HepG2 (cell line): ENCODE measurements at regions of chr16 and their contacts with region 1.

Region 1: GRCh38 chr16:11833951-11834695 is 17.2 kb downstream of the RSL1D1 start:
- DNase-seq: peak; percentile 84
- ATAC-seq: peak; percentile 61
- H3K4me3 ChIP-seq: no peak overlapping the region
- H3K27ac ChIP-seq: no peak overlapping the region
- H3K4me1 ChIP-seq: peaks cover 28% of the 10 kb centered on the region
- H3K27me3 ChIP-seq: no peaks in the 10 kb centered on the region
- CTCF ChIP-seq: no peak
- EP300 ChIP-seq: peak in 1 of 2 experiments; percentile 41; a peak in 2 of 4 replicates
- POLR2A ChIP-seq: no peak
- RAD21 ChIP-seq: no peak

Region 2: DNA sequence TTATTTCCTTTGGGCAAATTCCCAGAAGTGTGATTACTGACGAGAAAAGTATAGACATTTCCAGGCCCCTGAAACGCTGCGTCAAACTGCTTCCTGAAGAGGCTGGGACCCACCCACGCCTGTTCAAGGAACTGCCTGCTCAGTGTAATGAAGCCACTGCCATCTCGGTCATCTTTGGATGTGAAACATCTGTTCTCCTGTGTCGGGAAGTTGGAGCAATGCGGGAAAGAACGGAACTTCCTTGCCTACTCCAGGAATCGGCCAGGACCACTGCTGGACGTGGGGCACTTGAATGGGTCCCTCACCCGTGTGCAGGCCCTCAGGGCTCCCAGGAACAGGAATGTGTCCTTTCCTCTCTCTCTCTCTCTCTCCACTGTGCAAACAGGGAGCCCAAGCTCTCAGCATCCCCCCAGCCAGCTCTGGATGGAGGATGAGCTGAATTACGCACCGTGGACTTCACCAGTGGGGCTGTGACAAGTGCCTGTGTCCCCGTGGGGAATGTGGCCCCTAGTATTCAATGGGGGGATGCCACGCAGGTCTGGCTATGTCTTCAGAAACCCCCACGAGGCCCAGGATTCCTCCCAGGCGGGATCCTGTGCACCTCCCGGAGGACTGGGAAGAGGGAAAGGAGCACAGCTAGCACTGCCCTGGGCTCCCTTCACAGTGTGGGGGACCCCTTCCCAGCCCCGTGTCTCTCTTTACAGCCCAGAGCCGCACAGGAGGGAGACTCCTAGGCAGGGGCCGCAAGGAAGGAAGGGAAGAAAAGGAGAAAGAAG is 229.2 kb before region 1 on chr16:
- CTCF ChIA-PET with region 1: no interaction called
- POLR2A ChIA-PET with region 1: no interaction called
- in situ Hi-C with region 1: no loop called
- intact Hi-C with region 1: no loop called
- DNase-seq: no peak
- ATAC-seq: no peak
- H3K4me3 ChIP-seq: no peak overlapping the region
- H3K27ac ChIP-seq: no peak overlapping the region
- H3K4me1 ChIP-seq: peaks cover 12% of the 10 kb centered on the region; the same call in 1 of the 2 replicates
- H3K27me3 ChIP-seq: peaks cover 15 to 77% of the 10 kb centered on the region in 2 experiments; a peak in 4 of 5 replicates
- CTCF ChIP-seq: no peak
- EP300 ChIP-seq: no peak
- POLR2A ChIP-seq: no peak
- RAD21 ChIP-seq: no peak

Region 3: DNA sequence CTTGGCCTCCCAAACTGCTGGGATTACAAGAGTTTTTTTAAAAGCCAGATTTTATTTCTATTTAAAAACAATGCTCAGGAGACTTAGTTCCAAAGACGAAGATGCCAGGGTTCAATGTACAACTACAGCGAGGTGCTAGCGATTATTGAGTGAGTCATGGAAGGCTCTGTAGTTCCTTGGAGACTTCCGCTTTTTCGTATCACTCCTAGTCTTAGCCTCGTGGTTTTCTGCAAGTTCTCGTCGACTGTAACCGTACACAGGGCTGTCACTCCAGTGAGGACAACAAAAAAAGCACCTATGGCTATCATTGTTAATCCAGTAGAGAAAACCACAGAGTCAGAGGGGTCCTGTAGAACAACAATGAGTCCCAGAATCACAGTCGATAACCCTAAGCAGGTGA is 14.3 kb before region 1 on chr16:
- CTCF ChIA-PET with region 1: no interaction called
- POLR2A ChIA-PET with region 1: interaction called, 29 read pairs
- in situ Hi-C with region 1: no loop called
- intact Hi-C with region 1: no loop called
- DNase-seq: no peak
- ATAC-seq: no peak
- H3K4me3 ChIP-seq: no peak overlapping the region
- H3K27ac ChIP-seq: no peak overlapping the region
- H3K4me1 ChIP-seq: peaks cover 43% of the 10 kb centered on the region
- H3K27me3 ChIP-seq: 0 out of 5 replicates have a peak, but pooled peaks cover 0 to 5% of the 10 kb centered on the region in 2 experiments
- CTCF ChIP-seq: no peak
- EP300 ChIP-seq: no peak
- POLR2A ChIP-seq: no peak
- RAD21 ChIP-seq: no peak